GM12878 (cell line): ENCODE measurements at regions of chr7 and their contacts with region 1.

Region 1: GRCh38 chr7:117072620-117073118 is 119.4 kb downstream of the ST7 start:
- DNase-seq: no peak
- ATAC-seq: no peak
- H3K4me3 ChIP-seq: no peak overlapping the region
- H3K27ac ChIP-seq: no peak overlapping the region
- H3K4me1 ChIP-seq: peaks cover 5% of the 10 kb centered on the region; the same call in 1 of the 2 replicates
- H3K27me3 ChIP-seq: no peaks in the 10 kb centered on the region
- CTCF ChIP-seq: no peak
- EP300 ChIP-seq: no peak
- POLR2A ChIP-seq: no peak
- RAD21 ChIP-seq: no peak

Region 2: GRCh38 chr7:116859323-116859722 is 213.3 kb before region 1 on chr7:
- CTCF ChIA-PET with region 1: no interaction called
- POLR2A ChIA-PET with region 1: no interaction called
- RAD21 ChIA-PET with region 1: no interaction called
- SMC1A ChIA-PET with region 1: no interaction called
- in situ Hi-C with region 1: no loop called
- intact Hi-C with region 1: no loop called
- DNase-seq: no peak
- ATAC-seq: no peak
- H3K4me3 ChIP-seq: no peak overlapping the region
- H3K27ac ChIP-seq: no peak overlapping the region
- H3K4me1 ChIP-seq: no peaks in the 10 kb centered on the region
- H3K27me3 ChIP-seq: peaks cover 0 to 3% of the 10 kb centered on the region in 2 experiments; a peak in 2 of 4 replicates
- CTCF ChIP-seq: no peak
- EP300 ChIP-seq: no peak
- POLR2A ChIP-seq: no peak
- RAD21 ChIP-seq: no peak

Region 3: GRCh38 chr7:117014673-117015133 is 58.0 kb before region 1 on chr7:
- CTCF ChIA-PET with region 1: interaction called, 3 read pairs
- POLR2A ChIA-PET with region 1: interaction called, 10 read pairs
- RAD21 ChIA-PET with region 1: interaction called, 13 read pairs
- SMC1A ChIA-PET with region 1: interaction called, 48 read pairs
- in situ Hi-C with region 1: no loop called
- intact Hi-C with region 1: no loop called
- DNase-seq: no peak
- ATAC-seq: peak; percentile 52
- H3K4me3 ChIP-seq: peak overlapping the region; percentile 66; the same call in 1 of the 2 replicates
- H3K27ac ChIP-seq: peak overlapping the region; percentile 79
- H3K4me1 ChIP-seq: peaks cover 43% of the 10 kb centered on the region
- H3K27me3 ChIP-seq: no peaks in the 10 kb centered on the region
- CTCF ChIP-seq: no peak
- EP300 ChIP-seq: no peak
- POLR2A ChIP-seq: peak; percentile 51; the same call in 1 of the 2 replicates
- RAD21 ChIP-seq: no peak

Region 4: GRCh38 chr7:117019786-117020590 is 52.7 kb before region 1 on chr7:
- CTCF ChIA-PET with region 1: interaction called, 6 read pairs
- POLR2A ChIA-PET with region 1: no interaction called
- RAD21 ChIA-PET with region 1: interaction called, 6 read pairs
- SMC1A ChIA-PET with region 1: interaction called, 17 read pairs
- in situ Hi-C with region 1: no loop called
- intact Hi-C with region 1: no loop called
- DNase-seq: no peak
- ATAC-seq: no peak
- H3K4me3 ChIP-seq: 0 out of 2 replicates have a peak overlapping the region, but pooled peaks have one; percentile 17
- H3K27ac ChIP-seq: no peak overlapping the region
- H3K4me1 ChIP-seq: peaks cover 30% of the 10 kb centered on the region
- H3K27me3 ChIP-seq: no peaks in the 10 kb centered on the region
- CTCF ChIP-seq: no peak
- EP300 ChIP-seq: no peak
- POLR2A ChIP-seq: no peak
- RAD21 ChIP-seq: no peak

Region 5: DNA sequence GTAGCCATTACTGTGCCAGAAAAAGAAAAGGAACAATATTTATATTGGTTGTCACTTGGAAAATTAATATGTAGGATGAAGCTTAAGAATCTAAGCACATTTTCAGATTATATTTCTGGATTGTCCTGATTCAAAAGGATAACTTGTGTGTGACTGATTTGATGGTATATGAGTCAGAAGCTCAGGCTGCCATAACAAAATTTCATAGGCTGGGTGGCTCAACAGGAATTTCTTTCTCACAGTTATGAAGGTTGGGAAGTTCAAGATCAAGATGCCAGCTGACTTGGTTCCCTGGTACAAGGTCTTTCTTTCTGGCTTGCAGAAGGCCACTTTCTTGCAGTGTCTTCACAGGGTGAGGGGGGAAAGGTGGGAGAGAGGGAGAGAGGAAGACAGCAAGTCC is 10.9 kb before region 1 on chr7:
- CTCF ChIA-PET with region 1: interaction called, 4 read pairs
- POLR2A ChIA-PET with region 1: interaction called, 3 read pairs
- RAD21 ChIA-PET with region 1: interaction called, 4 read pairs
- SMC1A ChIA-PET with region 1: interaction called, 10 read pairs
- in situ Hi-C with region 1: no loop called
- intact Hi-C with region 1: no loop called
- DNase-seq: no peak
- ATAC-seq: no peak
- H3K4me3 ChIP-seq: no peak overlapping the region
- H3K27ac ChIP-seq: no peak overlapping the region
- H3K4me1 ChIP-seq: peaks cover 7% of the 10 kb centered on the region
- H3K27me3 ChIP-seq: no peaks in the 10 kb centered on the region
- CTCF ChIP-seq: no peak
- EP300 ChIP-seq: no peak
- POLR2A ChIP-seq: no peak
- RAD21 ChIP-seq: no peak

Region 6: DNA sequence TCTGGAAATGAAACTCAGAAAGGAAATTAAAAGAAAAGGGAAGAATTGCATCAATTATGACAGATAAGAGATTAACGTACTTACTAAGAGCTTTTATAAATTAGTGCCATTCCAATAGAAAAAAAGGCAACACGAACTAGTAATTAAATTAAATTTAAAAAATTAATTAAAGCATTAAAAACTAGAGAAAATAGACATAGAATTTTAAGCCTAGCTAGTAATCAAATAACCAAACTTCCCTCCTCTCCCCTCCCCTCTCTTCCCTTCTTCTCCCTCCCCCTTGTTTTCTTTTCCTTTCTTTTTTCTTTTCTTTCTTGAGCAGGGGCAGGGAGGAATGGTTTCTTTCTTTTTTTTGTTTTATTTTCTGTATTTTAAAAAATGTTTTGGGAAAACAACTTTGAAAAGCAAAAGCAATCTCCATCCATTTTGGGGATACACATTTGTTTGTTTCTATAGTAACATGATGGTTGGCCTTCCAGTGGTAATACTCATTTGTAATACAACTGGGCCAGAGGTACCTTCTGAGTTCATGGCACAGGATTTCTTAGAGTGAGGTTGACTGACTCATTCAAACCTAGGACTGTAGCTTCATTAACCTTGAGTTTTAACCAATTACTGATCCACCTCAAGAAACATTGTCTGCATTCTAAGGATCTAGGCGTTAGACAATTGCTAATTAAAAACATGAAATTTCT is 13.2 kb after region 1 on chr7:
- CTCF ChIA-PET with region 1: interaction called, 6 read pairs
- POLR2A ChIA-PET with region 1: interaction called, 4 read pairs
- RAD21 ChIA-PET with region 1: interaction called, 6 read pairs
- SMC1A ChIA-PET with region 1: interaction called, 33 read pairs
- in situ Hi-C with region 1: no loop called
- intact Hi-C with region 1: no loop called
- DNase-seq: no peak
- ATAC-seq: peak; percentile 69
- H3K4me3 ChIP-seq: no peak overlapping the region
- H3K27ac ChIP-seq: no peak overlapping the region
- H3K4me1 ChIP-seq: peaks cover 10% of the 10 kb centered on the region; the same call in 1 of the 2 replicates
- H3K27me3 ChIP-seq: no peaks in the 10 kb centered on the region
- CTCF ChIP-seq: no peak
- EP300 ChIP-seq: no peak
- POLR2A ChIP-seq: no peak
- RAD21 ChIP-seq: no peak

Region 7: DNA sequence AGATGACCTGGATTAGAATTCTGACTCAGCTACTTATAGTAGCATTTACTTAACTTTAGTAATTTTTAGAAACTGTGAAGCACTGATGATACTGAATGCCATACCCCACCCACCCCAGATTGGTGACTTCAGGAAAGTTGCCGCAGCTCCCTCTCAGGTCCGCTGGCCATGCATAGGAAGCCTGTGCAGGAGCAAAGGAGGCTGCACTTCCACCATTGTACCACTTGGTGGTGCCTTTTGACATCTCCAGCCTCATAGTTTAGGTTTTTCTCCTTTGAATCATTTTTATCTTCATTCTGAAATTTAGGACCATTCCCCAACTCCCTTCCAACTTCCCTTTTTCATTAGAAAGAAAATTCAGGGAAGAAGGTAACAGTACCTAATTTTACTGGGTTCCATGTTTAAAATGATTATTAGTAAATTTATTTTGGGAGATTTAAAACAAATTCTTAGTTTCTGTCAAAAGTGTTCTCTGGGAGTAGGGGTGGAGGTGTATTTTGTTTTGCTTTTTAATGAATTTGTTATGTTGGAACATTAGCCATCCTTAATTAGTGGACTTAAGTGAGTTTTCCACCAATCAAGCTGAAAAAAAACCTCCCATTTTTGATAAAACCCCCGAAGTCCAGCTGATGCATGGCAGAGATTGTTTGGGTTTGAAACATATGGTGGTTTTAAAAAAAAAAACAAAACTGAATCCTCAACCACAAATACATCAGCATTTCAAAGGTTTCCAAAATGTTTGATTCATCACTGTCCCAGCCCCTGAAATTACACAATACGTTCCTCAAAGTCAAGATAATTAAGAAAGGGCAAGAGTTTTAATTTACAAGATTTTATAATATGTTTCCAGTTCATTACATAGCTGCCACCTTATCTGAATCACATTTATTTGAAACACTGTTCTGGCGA is 140.6 kb after region 1 on chr7:
- CTCF ChIA-PET with region 1: no interaction called
- POLR2A ChIA-PET with region 1: no interaction called
- RAD21 ChIA-PET with region 1: no interaction called
- SMC1A ChIA-PET with region 1: no interaction called
- in situ Hi-C with region 1: no loop called
- intact Hi-C with region 1: no loop called
- DNase-seq: peak; percentile 42
- ATAC-seq: peak; percentile 88
- H3K4me3 ChIP-seq: no peak overlapping the region
- H3K27ac ChIP-seq: no peak overlapping the region
- H3K4me1 ChIP-seq: no peaks in the 10 kb centered on the region
- H3K27me3 ChIP-seq: no peaks in the 10 kb centered on the region
- CTCF ChIP-seq: peak; percentile 88 to 97 (median 92)
- EP300 ChIP-seq: no peak
- POLR2A ChIP-seq: no peak
- RAD21 ChIP-seq: peak; percentile 87

Region 8: DNA sequence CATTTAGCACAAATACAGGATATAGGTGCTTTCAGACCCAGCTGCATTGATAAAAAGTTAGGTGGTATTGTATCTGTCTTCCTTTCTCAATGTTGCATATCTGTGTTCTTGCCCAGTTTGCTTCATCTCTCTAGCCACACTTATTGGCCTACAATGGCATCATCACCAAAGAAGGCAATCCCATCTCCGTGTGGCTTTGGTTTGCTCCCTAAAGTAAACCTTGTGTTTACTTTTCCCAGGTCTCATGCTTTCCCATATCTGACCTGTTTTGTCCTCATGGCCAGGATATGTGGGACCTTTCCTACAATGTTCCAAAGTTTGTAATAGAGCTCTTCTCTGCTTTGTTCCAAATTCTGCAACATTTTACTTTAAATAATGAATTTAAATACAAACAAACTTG is 460.0 kb after region 1 on chr7:
- CTCF ChIA-PET with region 1: no interaction called
- POLR2A ChIA-PET with region 1: no interaction called
- RAD21 ChIA-PET with region 1: no interaction called
- SMC1A ChIA-PET with region 1: no interaction called
- in situ Hi-C with region 1: no loop called
- intact Hi-C with region 1: no loop called
- DNase-seq: no peak
- ATAC-seq: no peak
- H3K4me3 ChIP-seq: no peak overlapping the region
- H3K27ac ChIP-seq: no peak overlapping the region
- H3K4me1 ChIP-seq: no peaks in the 10 kb centered on the region
- H3K27me3 ChIP-seq: no peaks in the 10 kb centered on the region
- CTCF ChIP-seq: no peak
- EP300 ChIP-seq: no peak
- POLR2A ChIP-seq: no peak
- RAD21 ChIP-seq: no peak